CD4-positive, alpha-beta memory T cell (primary cell): ENCODE measurements at regions of chr1 and their contacts with region 1.

Region 1: DNA sequence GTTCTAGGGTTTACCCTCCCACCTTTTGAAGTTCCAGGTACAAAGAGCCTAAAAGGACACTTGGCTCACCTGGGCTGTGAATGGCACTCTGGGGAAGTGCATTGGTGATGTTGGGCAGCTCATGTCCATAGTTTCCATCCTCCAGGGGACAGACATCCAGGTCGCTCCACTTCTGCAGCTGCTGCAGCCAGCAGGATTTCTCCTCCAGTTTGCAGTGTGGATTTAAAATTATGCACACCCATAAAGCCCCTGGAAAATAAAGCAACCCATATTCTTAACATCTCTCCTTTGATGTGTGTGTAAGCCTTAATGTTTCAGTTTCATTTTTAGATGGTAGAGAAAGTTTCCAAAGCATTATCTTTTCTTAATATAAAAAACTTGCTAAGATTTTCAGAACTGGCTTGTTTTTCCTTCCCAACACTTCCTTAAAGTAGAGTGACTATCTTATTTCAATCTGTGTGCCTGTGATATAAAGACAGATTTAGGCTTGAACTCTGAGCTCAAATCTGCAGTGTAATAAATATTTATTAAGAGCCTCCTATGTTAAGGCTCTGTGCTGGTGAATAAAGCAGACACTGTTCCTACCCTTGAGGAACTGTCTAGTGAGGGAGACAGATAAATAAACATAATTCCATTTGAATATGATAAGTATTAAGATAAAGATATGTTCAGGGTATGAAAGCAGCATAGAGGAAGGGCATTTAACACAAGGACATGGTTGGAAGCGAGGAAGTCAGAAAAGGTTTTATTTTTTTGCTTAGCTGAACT is 39.1 kb downstream of the UROD start:
- DNase-seq: peak in 4 of 5 donors; percentile 15 to 39 (median 23)
- H3K4me3 ChIP-seq: peak overlapping the region; percentile 11 to 37
- H3K4me3 Mint-ChIP-seq: peak overlapping the region; percentile 76 to 86 (median 81)
- H3K27ac ChIP-seq: peak overlapping the region; percentile 40
- H3K27ac Mint-ChIP-seq: peak overlapping the region; percentile 64 to 92 (median 90)
- H3K4me1 ChIP-seq: peaks cover 16% of the 10 kb centered on the region
- H3K4me1 Mint-ChIP-seq: peaks cover 11 to 19% (median 13%) of the 10 kb centered on the region in 4 donors
- H3K27me3 ChIP-seq: no peaks in the 10 kb centered on the region
- H3K27me3 Mint-ChIP-seq: no peaks in the 10 kb centered on the region

Region 2: DNA sequence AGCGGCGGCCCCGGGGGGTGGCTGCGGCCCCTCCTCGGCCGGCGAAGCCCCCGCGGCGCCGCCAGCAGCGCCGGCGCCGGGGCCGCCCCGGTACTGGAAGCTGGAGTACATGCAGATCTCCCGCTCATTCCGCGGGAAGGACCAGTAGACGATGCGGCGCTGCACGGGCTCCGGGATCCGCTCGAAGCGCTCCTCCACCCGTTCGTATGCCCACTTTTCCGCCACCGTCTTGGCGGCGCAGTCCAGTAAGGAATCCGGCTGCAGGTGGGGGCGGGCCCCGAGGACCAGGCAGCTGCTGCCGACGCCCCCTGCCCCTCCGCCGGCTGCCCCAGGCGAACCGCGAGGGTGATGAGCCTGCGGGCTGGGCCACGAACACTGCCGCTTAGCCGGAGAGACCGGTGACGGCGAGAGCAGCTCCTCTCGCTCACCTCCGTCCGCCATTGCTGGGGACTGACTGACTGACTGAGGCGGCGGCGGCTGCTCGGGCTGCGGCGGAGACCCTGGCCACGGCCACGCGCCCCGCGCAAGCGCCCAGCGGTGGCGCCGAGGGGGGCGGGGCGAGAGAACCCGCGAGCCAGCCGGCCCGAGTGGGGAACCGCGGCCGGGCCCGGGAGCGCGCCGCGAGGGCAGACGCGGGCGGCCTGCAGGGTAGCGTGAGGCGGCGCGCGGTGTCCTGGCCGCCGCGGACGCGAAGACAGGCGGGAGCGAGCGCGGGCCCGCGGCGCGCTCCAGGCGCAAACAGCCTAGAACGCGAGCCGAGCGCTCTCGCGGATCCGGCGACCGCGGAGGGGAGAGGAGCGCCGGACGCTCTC is 154.9 kb after region 1 on chr1 and contains the start of gene ZSWIM5:
- CTCF ChIA-PET with region 1: interaction called, 4 read pairs
- POLR2A ChIA-PET with region 1: no interaction called
- intact Hi-C with region 1: loop called (anchors 10 kb)
- DNase-seq: peak; percentile 63 to 77 (median 75)
- H3K4me3 ChIP-seq: peak within 1 kb of the TSS; percentile 1 to 58
- H3K4me3 Mint-ChIP-seq: peak within 1 kb of the TSS; percentile 93 to 97 (median 95)
- H3K27ac ChIP-seq: peak within 1 kb of the TSS; percentile 31
- H3K27ac Mint-ChIP-seq: peak within 1 kb of the TSS; percentile 85 to 93 (median 90)
- H3K4me1 ChIP-seq: peaks cover 22% of the 10 kb centered on the region
- H3K4me1 Mint-ChIP-seq: peaks cover 17 to 33% (median 26%) of the 10 kb centered on the region in 4 donors
- H3K27me3 ChIP-seq: no peaks in the 10 kb centered on the region
- H3K27me3 Mint-ChIP-seq: peaks cover 1% of the 10 kb centered on the region in 2 donors
- total RNA-seq, gene ZSWIM5: 3.4 to 3.7 TPM